ENCODE measurements at regions of chr12 and their contacts with region 1.

Region 1: DNA sequence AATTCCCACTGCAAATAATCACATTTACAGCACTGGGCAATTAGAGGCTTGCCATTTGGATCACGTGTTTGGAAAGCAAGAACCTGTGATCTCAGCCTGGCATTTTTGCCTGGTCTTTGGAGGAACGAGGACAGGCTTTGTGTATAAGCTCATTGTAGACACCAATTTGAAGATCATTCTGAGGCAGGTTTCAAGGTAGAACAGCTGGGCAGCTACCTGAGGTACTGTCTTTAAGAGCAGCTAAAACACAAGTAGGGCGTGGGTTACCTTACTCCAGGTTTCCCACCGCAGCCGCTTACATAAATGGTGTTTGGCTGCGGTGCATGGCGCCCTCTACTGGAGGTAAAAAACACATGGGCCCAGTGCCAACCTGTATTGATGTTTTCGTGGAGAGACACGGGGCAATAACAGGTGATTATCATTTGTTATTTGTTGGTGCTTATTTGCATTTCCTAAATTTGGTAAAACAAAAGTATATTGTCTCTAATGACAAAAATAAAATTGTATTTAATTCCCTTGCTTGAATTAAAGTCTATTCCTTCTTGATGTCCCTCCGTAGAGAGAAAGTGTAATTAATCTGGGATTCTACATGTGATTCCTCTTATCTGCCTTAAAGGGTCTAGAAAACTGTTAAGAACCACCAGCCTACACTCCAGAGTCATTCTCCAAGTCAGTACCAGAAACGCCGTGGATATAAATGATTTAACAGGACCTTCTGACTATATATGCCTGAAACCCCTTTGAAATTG is 69.7 kb downstream of the SVOP start:
- DNase-seq: peak; percentile 77 to 84 (median 83)
- H3K4me3 ChIP-seq: peak overlapping the region in 2 of 7 experiments; percentile 30 to 56
- H3K27ac ChIP-seq: no peak overlapping the region
- H3K4me1 ChIP-seq: peaks cover 0 to 10% (median 1%) of the 10 kb centered on the region in 4 experiments
- H3K27me3 ChIP-seq: no peaks in the 10 kb centered on the region

Region 2: DNA sequence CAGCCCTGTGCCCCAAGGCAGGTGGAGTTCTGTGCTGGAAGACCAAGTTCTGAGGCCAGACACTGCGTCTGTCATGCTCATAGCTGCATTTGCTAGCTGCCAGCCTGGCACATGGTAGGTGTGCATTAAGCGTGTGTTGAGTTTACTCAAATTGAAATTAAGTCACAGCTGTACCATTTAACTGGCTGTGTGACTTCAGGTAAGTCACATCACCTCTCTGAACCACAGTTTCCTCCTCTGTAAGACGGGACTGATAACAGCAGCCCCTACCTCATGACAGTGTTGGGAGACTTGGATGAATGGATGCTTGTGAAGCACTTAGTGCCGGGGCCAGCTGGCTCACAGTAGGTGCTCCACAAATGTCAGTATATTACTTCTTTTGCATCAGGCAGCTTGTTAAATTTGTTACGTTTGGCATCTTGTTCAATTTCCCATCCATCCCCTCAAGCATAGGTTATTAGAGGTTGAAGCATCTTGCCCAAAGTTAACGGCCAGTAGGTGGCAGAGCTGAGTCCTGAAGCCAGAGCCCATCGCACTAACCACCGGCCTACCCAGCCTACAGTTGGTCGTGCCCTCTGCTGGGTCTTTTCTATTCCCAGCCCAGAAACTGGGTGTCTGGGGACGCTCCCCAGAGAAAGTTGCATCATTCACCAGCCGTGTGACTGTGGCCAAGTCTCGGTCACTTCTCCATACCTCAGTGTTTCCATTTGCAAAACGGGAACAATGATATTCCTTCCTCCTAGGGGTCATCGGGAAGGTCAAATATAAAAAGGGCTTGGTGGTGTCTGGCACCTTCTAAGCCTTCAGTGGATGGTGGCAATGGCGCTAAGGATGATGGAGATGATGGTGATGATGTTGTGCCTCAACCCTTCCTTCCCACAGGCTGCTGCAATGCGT is 66.8 kb before region 1 on chr12:
- CTCF ChIA-PET with region 1: interaction called, 73 read pairs
- POLR2A ChIA-PET with region 1: interaction called, 3 read pairs
- DNase-seq: peak; percentile 69 to 87 (median 78)
- H3K4me3 ChIP-seq: no peak overlapping the region
- H3K27ac ChIP-seq: no peak overlapping the region
- H3K4me1 ChIP-seq: no peaks in the 10 kb centered on the region
- H3K27me3 ChIP-seq: no peaks in the 10 kb centered on the region

Region 3: GRCh38 chr12:108890212-108890611 is 61.0 kb before region 1 on chr12:
- CTCF ChIA-PET with region 1: interaction called, 32 read pairs
- POLR2A ChIA-PET with region 1: no interaction called
- DNase-seq: peak in 2 of 3 donors; percentile 31 to 37
- H3K4me3 ChIP-seq: no peak overlapping the region
- H3K27ac ChIP-seq: no peak overlapping the region
- H3K4me1 ChIP-seq: no peaks in the 10 kb centered on the region
- H3K27me3 ChIP-seq: no peaks in the 10 kb centered on the region

Region 4: DNA sequence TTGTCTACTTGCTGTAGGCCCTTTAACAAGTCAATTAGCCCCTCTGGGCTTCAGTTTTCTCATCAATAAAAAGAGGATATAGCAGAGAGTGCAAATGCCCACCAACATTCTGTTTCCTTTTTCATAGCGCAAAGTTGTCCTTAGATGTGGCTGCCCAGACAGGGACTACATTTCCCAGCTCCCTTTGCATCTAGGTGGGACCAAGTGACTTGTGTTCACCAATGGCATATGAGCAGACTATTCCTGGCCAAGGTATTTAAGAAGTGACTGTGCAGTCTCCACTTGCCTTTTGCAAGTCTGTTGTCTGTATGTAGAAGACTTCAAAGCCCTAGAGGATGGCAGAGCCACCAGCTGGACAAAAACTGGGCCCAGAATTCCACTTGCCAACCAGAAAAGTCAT is 11.6 kb before region 1 on chr12:
- CTCF ChIA-PET with region 1: interaction called, 18 read pairs
- POLR2A ChIA-PET with region 1: no interaction called
- DNase-seq: peak; percentile 62 to 90 (median 85)
- H3K4me3 ChIP-seq: no peak overlapping the region
- H3K27ac ChIP-seq: no peak overlapping the region
- H3K4me1 ChIP-seq: peaks cover 0 to 5% (median 0%) of the 10 kb centered on the region in 4 experiments
- H3K27me3 ChIP-seq: no peaks in the 10 kb centered on the region

Region 5: GRCh38 chr12:109044241-109044640 is 93.1 kb after region 1 on chr12:
- CTCF ChIA-PET with region 1: no interaction called
- POLR2A ChIA-PET with region 1: no interaction called
- DNase-seq: no peak
- H3K4me3 ChIP-seq: no peak overlapping the region
- H3K27ac ChIP-seq: no peak overlapping the region
- H3K4me1 ChIP-seq: no peaks in the 10 kb centered on the region
- H3K27me3 ChIP-seq: no peaks in the 10 kb centered on the region